Left cardiac atrium (tissue), 4 donors: ENCODE measurements at regions of chr12 and their contacts with region 1.

Region 1: DNA sequence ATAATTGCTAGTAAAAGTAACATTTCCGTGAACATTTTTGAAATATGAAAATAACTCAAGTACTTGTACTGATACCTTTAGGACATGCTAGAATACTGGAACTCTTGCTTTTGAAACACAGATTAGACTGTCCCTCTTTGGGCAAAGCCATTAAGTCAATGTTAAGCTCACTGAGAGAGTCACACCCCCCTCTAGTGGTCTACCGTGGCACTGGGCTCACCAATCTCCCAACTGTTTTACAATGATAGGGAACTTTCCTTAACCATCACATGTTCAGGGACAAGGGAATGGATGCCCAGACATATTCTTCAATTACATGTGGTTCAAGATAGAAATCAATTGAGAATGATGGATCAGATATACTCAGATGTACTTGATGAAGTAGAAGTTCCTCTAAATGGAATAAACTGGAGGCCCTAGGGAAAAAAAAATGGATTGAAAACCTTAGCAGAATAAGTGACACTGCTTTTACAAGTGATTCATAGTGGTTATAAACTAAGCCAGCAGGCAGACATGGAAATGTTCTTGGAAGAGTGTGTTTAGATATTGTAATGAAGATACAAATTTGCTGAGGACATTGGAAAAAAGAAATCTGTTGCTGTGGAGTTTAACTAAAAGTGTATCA is 17.8 kb downstream of the NANOG start:
- DNase-seq: peak; percentile 66
- ATAC-seq: peak; percentile 57 to 70

Region 2: DNA sequence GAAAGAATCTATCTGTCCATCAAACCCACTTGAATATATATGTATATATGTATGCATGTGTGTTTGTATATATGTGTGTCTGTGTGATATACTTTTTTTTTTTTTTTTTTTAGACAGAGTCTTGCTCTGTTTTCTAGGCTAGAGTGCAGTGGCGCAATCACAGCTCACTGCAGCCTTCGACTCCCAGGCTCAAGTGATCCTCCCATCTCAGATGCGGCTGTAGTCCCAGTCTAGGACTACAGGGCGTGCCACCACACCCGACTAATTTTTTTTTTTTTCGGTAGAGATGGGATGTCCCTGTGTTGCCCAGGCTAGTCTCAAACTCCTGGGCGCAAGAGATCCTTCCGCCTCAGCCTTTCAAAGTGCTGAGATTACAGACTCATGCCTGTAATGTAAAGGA is 128.2 kb before region 1 on chr12:
- intact Hi-C with region 1: loop called in 1 of 2 experiments (anchors 5 kb)
- DNase-seq: no peak
- ATAC-seq: no peak